OCI-LY7 (cell line): ENCODE measurements at regions of chr19 and their contacts with region 1.

Region 1: DNA sequence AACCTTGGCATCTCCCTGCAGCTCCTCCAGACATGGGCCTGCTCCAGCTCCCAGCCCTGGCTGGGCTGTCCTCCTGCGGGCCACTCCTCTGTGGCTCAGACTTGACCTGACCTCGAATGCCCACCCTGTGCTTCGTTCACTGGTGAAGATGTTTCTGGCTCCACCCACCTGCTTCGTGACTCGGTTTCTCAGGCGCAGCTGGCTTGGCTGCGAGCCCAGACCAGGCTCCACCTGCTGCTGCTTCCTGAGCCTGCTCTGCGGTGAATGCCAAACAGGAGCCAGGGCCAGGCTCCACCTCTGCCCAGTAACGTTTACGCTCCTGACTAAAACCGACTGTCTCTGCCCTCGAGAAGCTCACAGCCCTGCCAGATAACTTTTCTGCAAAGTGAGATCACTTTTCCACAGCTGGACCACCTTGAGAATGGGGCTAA is 8.9 kb upstream of the RSPH6A start:
- DNase-seq: no peak
- H3K4me3 ChIP-seq: no peak overlapping the region
- H3K27ac ChIP-seq: no peak overlapping the region
- H3K4me1 ChIP-seq: no peaks in the 10 kb centered on the region
- CTCF ChIP-seq: no peak

Region 2: GRCh38 chr19:45523642-45524256 is 300.3 kb before region 1 on chr19:
- CTCF ChIA-PET with region 1: no interaction called
- POLR2A ChIA-PET with region 1: no interaction called
- intact Hi-C with region 1: no loop called
- DNase-seq: peak; percentile 90
- H3K4me3 ChIP-seq: no peak overlapping the region
- H3K27ac ChIP-seq: no peak overlapping the region
- H3K4me1 ChIP-seq: peaks cover 4% of the 10 kb centered on the region
- CTCF ChIP-seq: peak; percentile 98

Region 3: DNA sequence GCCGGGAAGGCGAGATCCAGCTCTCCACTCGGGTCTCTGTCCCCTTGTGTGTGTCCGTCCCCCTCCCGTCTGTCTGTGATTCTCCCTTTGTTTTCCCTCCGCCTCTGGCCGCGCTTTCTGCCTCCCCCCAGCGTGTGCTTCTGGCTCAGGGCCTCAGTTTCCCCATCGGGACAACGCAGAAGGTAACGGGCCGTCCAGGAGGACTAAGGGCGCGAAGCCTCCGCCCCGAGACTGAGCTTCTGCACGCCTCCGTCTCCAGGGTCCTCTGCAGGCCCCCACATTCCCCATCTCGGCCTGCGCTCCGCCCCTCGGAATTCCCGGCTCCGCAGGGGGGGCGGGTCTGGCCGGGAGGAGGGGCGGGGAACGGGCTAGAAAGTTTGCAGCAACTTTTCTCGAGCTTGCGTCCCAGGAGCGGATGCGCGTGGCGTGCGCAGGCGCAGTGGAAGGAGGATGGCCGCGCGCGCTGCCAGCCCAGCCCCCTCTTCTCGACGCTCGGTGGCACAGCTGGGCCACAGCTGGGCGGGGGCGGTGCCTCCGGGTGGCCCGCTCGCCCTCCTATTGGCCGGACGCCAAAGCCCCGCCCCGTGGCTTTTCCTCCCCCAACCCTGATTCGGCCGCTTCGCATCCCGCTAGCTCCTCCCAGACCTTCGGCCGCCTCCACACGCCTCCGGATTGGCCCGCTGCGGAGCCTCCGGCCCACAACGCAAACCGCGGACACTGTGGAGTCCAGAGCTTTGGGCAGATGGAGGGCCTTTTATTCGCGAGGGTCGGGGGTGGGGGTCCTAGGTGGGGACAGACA is 54.9 kb before region 1 on chr19 and contains the start of gene SIX5:
- CTCF ChIA-PET with region 1: no interaction called
- POLR2A ChIA-PET with region 1: no interaction called
- intact Hi-C with region 1: no loop called
- DNase-seq: peak; percentile 99
- H3K4me3 ChIP-seq: peak within 1 kb of the TSS; percentile 93
- H3K27ac ChIP-seq: peak within 1 kb of the TSS; percentile 71
- H3K4me1 ChIP-seq: peaks cover 33% of the 10 kb centered on the region
- CTCF ChIP-seq: no peak
- total RNA-seq, gene SIX5: 9.4 and 10.2 TPM in 2 replicates

Region 4: GRCh38 chr19:45834970-45835369 is 10.9 kb after region 1 on chr19:
- CTCF ChIA-PET with region 1: no interaction called
- POLR2A ChIA-PET with region 1: interaction called, 10 read pairs
- intact Hi-C with region 1: no loop called
- DNase-seq: no peak
- H3K4me3 ChIP-seq: no peak overlapping the region
- H3K27ac ChIP-seq: no peak overlapping the region
- H3K4me1 ChIP-seq: no peaks in the 10 kb centered on the region
- CTCF ChIP-seq: no peak

Region 5: GRCh38 chr19:45876411-45877197 is 52.5 kb after region 1 on chr19:
- CTCF ChIA-PET with region 1: no interaction called
- POLR2A ChIA-PET with region 1: no interaction called
- intact Hi-C with region 1: no loop called
- DNase-seq: no peak
- H3K4me3 ChIP-seq: no peak overlapping the region
- H3K27ac ChIP-seq: no peak overlapping the region
- H3K4me1 ChIP-seq: peaks cover 11% of the 10 kb centered on the region
- CTCF ChIP-seq: no peak

Region 6: GRCh38 chr19:45895519-45895972 is 71.5 kb after region 1 on chr19:
- CTCF ChIA-PET with region 1: no interaction called
- POLR2A ChIA-PET with region 1: interaction called, 10 read pairs
- intact Hi-C with region 1: no loop called
- DNase-seq: no peak
- H3K4me3 ChIP-seq: no peak overlapping the region
- H3K27ac ChIP-seq: peak overlapping the region; percentile 52
- H3K4me1 ChIP-seq: peaks cover 31% of the 10 kb centered on the region
- CTCF ChIP-seq: no peak